ENCODE measurements at regions of chr2 and their contacts with region 1.

Region 1: DNA sequence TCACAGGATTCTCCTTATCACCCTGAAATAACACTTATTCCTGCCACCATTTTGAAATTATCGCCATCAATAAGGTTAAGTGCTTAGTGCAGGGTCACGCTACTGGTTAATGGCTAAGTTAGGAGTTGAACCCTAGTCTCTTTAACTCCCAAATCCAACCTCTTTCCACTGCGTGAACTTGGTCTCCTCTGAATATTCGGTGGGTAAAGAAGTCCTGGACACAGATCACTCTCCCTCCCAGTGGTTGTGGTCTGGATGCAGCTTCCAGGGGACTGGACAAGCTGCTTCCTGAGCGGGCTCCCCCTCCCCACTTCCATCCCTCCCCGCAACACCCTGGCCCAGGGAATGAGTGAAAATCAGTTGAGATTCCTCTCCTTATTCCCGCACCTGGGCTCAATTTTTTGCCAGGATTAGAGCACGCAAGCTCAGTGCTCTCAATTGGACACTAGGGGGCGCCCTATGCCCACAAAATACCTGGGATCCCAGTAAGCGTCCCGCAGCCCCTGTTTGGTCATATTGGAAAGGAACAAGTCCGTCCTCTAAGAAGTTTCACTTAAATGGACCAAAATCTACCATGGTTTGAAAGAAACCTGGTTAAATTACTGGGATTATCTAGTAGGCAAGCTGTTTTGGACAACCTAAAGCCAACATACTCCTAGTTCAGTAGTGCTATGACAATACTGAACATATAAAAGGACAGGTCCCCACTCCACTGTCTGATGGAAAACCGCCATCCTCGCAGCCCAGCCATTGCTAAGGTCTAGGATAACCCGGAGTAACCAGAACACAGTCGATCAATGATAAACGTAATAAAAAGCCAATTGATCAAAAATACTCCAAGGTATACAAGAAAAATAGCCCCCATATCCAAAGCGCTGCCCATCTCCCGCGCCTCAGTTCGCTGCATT is 40.4 kb downstream of the DHRS9 start:
- DNase-seq: peak; percentile 82 to 88
- H3K4me3 ChIP-seq: no peak overlapping the region
- H3K27ac ChIP-seq: no peak overlapping the region
- H3K4me1 ChIP-seq: no peaks in the 10 kb centered on the region
- H3K27me3 ChIP-seq: no peaks in the 10 kb centered on the region
- CTCF ChIP-seq: peak; percentile 71 to 89 (median 86)
- POLR2A ChIP-seq: no peak

Region 2: GRCh38 chr2:169131587-169132512 is 22.1 kb after region 1 on chr2:
- intact Hi-C with region 1: loop called (anchors 2 kb)
- DNase-seq: no peak
- H3K4me3 ChIP-seq: no peak overlapping the region
- H3K27ac ChIP-seq: no peak overlapping the region
- H3K4me1 ChIP-seq: no peaks in the 10 kb centered on the region
- H3K27me3 ChIP-seq: no peaks in the 10 kb centered on the region
- CTCF ChIP-seq: peak; percentile 52 to 84 (median 74)
- POLR2A ChIP-seq: no peak